CD8-positive, alpha-beta memory T cell (primary cell): ENCODE measurements at regions of chr5 and their contacts with region 1.

Region 1: GRCh38 chr5:151264113-151264512 is 11.1 kb downstream of the GM2A start:
- DNase-seq: no peak
- H3K4me3 ChIP-seq: no peak overlapping the region
- H3K4me3 Mint-ChIP-seq: no peak overlapping the region
- H3K27ac ChIP-seq: no peak overlapping the region
- H3K27ac Mint-ChIP-seq: peak overlapping the region in 1 of 8 donors; percentile 48
- H3K4me1 ChIP-seq: no peaks in the 10 kb centered on the region
- H3K4me1 Mint-ChIP-seq: peaks cover 0 to 2% (median 0%) of the 10 kb centered on the region in 3 donors
- H3K27me3 ChIP-seq: no peaks in the 10 kb centered on the region
- H3K27me3 Mint-ChIP-seq: no peaks in the 10 kb centered on the region

Region 2: GRCh38 chr5:149540089-149540488 is 1724.0 kb before region 1 on chr5:
- CTCF ChIA-PET with region 1: no interaction called
- POLR2A ChIA-PET with region 1: interaction called, 10 read pairs
- DNase-seq: no peak
- H3K4me3 ChIP-seq: no peak overlapping the region
- H3K4me3 Mint-ChIP-seq: peak overlapping the region in 6 of 7 donors; percentile 3 to 74 (median 54)
- H3K27ac ChIP-seq: no peak overlapping the region
- H3K27ac Mint-ChIP-seq: peak overlapping the region in 7 of 8 donors; percentile 9 to 79 (median 55)
- H3K4me1 ChIP-seq: peaks cover 62% of the 10 kb centered on the region
- H3K4me1 Mint-ChIP-seq: peaks cover 62 to 85% (median 78%) of the 10 kb centered on the region in 3 donors
- H3K27me3 ChIP-seq: no peaks in the 10 kb centered on the region
- H3K27me3 Mint-ChIP-seq: no peaks in the 10 kb centered on the region